Activated naive CD4-positive, alpha-beta T cell treated with anti-CD3 and anti-CD28 coated beads, Interleukin-2, amount 10 ng/mL, durations not matched to agents 7 days and 5 days (primary cell): ENCODE measurements at regions of chr16 and their contacts with region 1.

Region 1: DNA sequence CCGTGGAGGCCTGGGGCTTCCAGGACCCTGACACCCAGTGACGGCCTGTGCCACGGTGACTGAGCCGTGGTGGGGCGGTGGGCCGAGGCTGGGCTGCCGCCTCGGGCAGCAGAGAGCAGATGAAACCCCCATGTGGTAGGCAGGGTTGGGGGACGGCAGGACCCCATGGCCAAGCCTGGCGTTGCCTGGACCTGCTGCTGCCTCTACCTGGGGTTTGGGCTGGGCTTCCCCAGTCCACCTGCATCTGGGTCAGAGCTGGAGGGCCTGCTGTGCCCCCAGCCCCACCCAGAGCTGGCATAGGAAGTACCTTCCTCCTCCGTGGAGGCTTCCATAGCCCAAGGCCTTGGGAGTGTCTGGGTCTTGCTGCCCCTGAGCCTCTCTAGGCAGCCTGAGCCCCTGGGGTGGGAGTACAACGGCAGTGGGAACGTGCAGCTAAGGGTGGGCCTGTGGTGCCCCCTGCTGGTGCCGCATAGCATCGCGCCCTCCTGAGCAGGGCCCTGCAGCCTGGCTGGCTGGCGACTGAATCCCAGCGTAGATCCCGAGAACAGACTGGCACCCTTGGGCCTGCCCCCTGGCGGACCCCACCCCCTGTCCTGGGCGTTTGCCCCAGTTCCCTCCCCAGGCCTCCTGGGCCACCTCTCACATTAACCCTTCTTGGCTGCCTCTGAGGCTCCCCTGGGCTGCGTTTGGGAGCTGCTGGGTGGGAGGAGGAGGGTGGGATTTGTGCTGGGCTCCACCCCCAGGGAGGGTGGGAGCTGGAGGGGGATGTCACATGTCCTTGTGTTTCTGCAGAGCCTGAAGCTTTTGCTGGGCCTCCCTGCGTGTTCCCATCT is 12.6 kb upstream of the ATP6V0C start:
- DNase-seq: peak; percentile 88
- H3K4me3 Mint-ChIP-seq: no peak overlapping the region
- H3K27ac Mint-ChIP-seq: no peak overlapping the region
- H3K4me1 Mint-ChIP-seq: no peaks in the 10 kb centered on the region
- H3K27me3 Mint-ChIP-seq: peaks cover 4% of the 10 kb centered on the region

Region 2: DNA sequence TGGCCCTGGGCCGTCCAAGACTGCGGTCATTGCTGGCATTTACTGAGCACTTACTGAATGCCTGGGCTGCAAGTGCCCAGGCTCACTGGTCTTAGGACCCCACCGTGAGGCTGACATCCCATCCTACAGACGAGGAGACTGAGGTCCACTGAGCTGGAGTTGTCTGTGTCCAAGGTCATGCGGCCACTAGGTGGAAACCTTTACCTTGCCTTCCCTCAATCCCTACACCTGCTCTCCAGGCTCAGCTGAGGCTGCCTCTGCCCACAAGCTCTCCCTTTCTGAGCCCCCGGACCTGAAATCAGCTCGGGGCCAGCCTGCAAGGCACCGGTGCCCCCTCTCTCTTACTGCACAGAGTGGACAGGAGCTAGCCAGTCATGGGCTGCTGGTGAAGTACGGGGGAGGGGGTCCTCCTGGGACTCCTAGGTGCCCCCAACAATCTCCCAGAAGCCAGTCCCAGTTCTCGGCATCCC is 306.2 kb before region 1 on chr16:
- CTCF ChIA-PET with region 1: interaction called, 13 read pairs
- DNase-seq: peak; percentile 72
- H3K4me3 Mint-ChIP-seq: peak overlapping the region; percentile 41
- H3K27ac Mint-ChIP-seq: no peak overlapping the region
- H3K4me1 Mint-ChIP-seq: peaks cover 4% of the 10 kb centered on the region
- H3K27me3 Mint-ChIP-seq: peaks cover 73% of the 10 kb centered on the region

Region 3: DNA sequence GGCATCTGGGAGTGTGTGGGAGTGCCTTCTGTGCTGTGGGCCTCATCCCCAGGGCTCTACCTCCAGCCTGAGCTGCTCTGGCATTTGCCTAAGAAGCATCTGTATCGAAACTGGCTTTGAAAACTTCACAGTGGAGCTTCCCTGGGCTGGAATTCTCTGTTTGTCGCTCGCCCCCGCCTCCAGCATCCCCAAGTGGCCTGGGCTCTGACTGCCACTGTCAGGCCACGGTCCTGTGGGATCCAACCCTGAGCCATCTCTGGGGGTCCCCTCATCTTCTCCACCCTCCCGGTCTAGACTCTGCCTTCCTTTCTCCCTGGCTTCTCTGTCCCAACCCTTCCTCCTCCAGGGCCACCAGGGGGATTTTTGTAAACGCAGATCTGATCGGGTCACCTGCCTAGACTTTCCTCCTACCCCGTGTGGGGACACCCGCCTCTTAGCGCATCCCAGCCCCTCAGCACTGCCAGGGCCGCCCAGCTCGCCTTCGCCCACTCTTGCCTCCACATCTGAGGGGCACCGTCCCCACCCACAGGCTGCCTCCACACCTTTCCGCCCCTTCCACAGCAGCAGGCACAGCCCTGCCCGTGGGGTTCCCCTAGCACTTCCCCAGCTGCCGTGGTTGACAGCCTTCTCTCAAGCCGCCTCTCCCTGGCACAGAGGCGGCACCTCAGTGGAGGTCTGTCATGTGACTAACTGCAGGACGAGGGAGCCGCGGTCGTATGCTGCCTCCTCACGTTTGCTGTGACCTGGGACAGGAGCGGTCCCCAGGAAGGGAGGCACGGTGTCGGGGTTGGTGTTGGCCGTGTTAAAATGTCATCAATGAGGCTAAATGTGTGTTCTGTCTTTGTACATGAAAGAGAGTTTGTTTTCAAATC is 14.3 kb before region 1 on chr16:
- CTCF ChIA-PET with region 1: interaction called, 12 read pairs
- DNase-seq: peak; percentile 87
- H3K4me3 Mint-ChIP-seq: peak overlapping the region; percentile 34
- H3K27ac Mint-ChIP-seq: peak overlapping the region; percentile 8
- H3K4me1 Mint-ChIP-seq: peaks cover 20% of the 10 kb centered on the region
- H3K27me3 Mint-ChIP-seq: peaks cover 7% of the 10 kb centered on the region

Region 4: DNA sequence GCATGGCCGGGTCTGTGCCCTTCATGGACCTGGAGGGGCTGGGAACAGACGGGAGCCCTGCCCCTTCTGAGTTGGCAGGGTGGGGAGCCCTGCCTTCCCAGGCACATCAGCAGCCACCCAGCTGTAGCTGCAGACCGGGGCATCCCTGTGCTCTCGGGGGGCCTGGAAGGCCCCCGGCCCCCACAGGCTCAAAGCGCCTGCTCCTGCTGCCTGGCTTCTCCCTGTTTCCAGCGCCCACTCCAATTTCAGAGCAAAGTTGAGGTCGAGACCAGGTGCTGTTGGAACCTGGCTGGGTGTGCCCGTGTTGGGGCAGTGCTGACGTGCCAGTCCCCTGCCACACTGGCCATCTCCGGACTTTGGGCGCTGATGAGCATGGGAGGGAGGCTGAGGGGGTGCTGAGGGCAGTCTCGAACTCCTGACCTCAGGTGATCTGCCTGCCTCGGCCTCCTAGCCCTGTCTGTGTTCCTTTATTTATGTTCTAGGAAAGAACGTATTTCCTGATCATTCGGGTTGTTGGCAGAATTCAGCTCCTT is 223.7 kb after region 1 on chr16:
- CTCF ChIA-PET with region 1: no interaction called
- DNase-seq: no peak
- H3K4me3 Mint-ChIP-seq: no peak overlapping the region
- H3K27ac Mint-ChIP-seq: no peak overlapping the region
- H3K4me1 Mint-ChIP-seq: peaks cover 2% of the 10 kb centered on the region
- H3K27me3 Mint-ChIP-seq: peaks cover 26% of the 10 kb centered on the region